ENCODE measurements at regions of chr7 and their contacts with region 1.

Region 1: GRCh38 chr7:786472-787255 is 45.6 kb upstream of the SUN1 start:
- DNase-seq: peak; percentile 74 to 91 (median 91)
- ATAC-seq: peak; percentile 71 to 84
- H3K4me3 ChIP-seq: no peak overlapping the region
- H3K27ac ChIP-seq: no peak overlapping the region
- H3K4me1 ChIP-seq: no peaks in the 10 kb centered on the region
- H3K27me3 ChIP-seq: no peaks in the 10 kb centered on the region

Region 2: GRCh38 chr7:821688-822087 is 35.0 kb after region 1 on chr7:
- intact Hi-C with region 1: loop called in 1 of 4 experiments (anchors 5 kb)
- DNase-seq: peak in 2 of 3 donors; percentile 28 to 37
- ATAC-seq: peak; percentile 49 to 52
- H3K4me3 ChIP-seq: no peak overlapping the region
- H3K27ac ChIP-seq: peak overlapping the region; percentile 66
- H3K4me1 ChIP-seq: peaks cover 23% of the 10 kb centered on the region
- H3K27me3 ChIP-seq: no peaks in the 10 kb centered on the region